ENCODE measurements at regions of chr1 and their contacts with region 1.

Region 1: GRCh38 chr1:92274939-92275338 is 23.8 kb downstream of the GLMN start:
- DNase-seq: no peak
- H3K4me3 ChIP-seq: no peak overlapping the region
- H3K27ac ChIP-seq: no peak overlapping the region
- H3K4me1 ChIP-seq: no peaks in the 10 kb centered on the region
- H3K27me3 ChIP-seq: no peaks in the 10 kb centered on the region
- CTCF ChIP-seq: no peak

Region 2: DNA sequence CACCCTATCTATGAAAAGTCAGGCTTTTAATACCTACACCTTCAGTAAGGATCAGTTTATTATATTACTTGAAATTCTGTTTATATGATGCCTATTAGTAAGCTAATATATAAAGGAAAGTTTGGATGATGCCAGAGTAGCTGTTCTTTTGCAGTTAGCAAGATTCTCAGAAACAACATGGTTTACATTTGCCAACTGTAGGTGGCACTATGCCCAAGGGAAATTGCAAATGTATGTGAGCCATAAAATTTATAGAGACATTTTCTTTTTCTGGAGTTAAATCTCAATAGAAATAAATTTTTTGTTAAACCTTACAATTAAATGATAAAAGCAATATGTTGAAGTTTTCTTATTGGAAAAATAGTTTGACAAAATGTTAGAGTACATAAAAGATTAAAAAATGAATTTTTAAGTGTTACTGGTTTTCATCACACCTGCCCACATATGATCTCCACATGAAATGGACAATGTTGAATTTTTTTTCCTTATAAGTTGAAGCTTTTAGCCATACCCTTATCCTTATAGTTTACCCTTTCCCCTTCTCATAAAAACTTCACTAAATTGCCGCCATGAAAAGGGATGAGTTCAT is 277.2 kb before region 1 on chr1:
- dilution Hi-C with region 1: loop called (anchors 25 kb)
- DNase-seq: peak; percentile 1
- H3K4me3 ChIP-seq: no peak overlapping the region
- H3K27ac ChIP-seq: no peak overlapping the region
- H3K4me1 ChIP-seq: no peaks in the 10 kb centered on the region
- H3K27me3 ChIP-seq: no peaks in the 10 kb centered on the region
- CTCF ChIP-seq: peak in 2 of 3 experiments; percentile 48 to 50

Region 3: GRCh38 chr1:92211166-92211565 is 63.8 kb before region 1 on chr1:
- dilution Hi-C with region 1: no loop called
- DNase-seq: no peak
- H3K4me3 ChIP-seq: no peak overlapping the region
- H3K27ac ChIP-seq: no peak overlapping the region
- H3K4me1 ChIP-seq: no peaks in the 10 kb centered on the region
- H3K27me3 ChIP-seq: no peaks in the 10 kb centered on the region
- CTCF ChIP-seq: no peak